OCI-LY7 (cell line): ENCODE measurements at regions of chr15 and their contacts with region 1.

Region 1: GRCh38 chr15:59528965-59529402 is 82.6 kb upstream of the GCNT3 start:
- DNase-seq: peak; percentile 81
- H3K4me3 ChIP-seq: no peak overlapping the region
- H3K27ac ChIP-seq: no peak overlapping the region
- H3K4me1 ChIP-seq: peaks cover 28% of the 10 kb centered on the region
- CTCF ChIP-seq: peak; percentile 95

Region 2: DNA sequence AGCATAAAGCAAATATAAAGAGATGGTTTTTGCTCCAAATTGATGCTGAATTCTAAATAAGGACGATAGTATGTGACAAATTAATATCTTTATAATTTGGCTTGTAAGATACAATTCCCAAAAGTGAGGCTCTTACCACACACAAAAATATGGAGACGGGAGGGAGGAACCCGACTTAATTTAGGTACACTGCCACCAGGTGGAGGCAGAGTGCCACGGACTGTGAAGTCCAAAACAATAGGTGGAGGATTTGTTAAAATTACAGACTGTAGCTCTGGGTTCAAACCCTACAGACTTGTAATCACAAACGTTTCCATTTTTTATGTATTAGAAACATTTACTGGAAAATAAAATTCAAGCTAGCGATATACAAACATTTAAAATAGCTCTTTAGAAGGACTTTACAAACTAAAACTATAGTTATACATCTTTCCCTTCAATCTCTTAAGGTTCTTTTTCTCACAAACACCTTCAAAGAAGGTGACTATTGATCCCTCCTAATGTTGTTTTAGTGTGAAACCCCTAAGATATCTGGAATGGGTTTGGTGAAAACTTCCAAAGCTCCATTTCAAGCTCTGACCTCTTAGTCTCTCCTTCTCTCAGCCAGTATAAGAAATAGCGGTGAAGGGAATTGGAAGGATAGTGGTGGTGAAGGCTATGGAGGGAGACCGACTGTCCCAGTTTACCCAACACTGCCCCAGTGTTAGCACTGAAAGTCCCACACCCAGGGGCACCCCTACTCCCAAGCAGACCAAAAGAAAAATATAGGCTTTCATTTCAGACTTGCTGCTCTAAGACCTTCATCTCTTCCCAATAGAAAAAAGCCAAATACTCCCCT is 1301.1 kb before region 1 on chr15:
- CTCF ChIA-PET with region 1: no interaction called
- POLR2A ChIA-PET with region 1: no interaction called
- intact Hi-C with region 1: loop called (anchors 1 kb)
- DNase-seq: peak; percentile 75
- H3K4me3 ChIP-seq: no peak overlapping the region
- H3K27ac ChIP-seq: no peak overlapping the region
- H3K4me1 ChIP-seq: no peaks in the 10 kb centered on the region
- CTCF ChIP-seq: peak; percentile 97

Region 3: GRCh38 chr15:59492389-59493377 is 36.3 kb before region 1 on chr15:
- CTCF ChIA-PET with region 1: no interaction called
- POLR2A ChIA-PET with region 1: no interaction called
- intact Hi-C with region 1: loop called (anchors 2 kb)
- DNase-seq: peak; percentile 76
- H3K4me3 ChIP-seq: no peak overlapping the region
- H3K27ac ChIP-seq: no peak overlapping the region
- H3K4me1 ChIP-seq: no peaks in the 10 kb centered on the region
- CTCF ChIP-seq: peak; percentile 98

Region 4: GRCh38 chr15:59562448-59563186 is 33.6 kb after region 1 on chr15:
- CTCF ChIA-PET with region 1: no interaction called
- POLR2A ChIA-PET with region 1: interaction called, 3 read pairs
- intact Hi-C with region 1: loop called (anchors 2 kb)
- DNase-seq: no peak
- H3K4me3 ChIP-seq: no peak overlapping the region
- H3K27ac ChIP-seq: no peak overlapping the region
- H3K4me1 ChIP-seq: peaks cover 6% of the 10 kb centered on the region
- CTCF ChIP-seq: peak; percentile 73

Region 5: DNA sequence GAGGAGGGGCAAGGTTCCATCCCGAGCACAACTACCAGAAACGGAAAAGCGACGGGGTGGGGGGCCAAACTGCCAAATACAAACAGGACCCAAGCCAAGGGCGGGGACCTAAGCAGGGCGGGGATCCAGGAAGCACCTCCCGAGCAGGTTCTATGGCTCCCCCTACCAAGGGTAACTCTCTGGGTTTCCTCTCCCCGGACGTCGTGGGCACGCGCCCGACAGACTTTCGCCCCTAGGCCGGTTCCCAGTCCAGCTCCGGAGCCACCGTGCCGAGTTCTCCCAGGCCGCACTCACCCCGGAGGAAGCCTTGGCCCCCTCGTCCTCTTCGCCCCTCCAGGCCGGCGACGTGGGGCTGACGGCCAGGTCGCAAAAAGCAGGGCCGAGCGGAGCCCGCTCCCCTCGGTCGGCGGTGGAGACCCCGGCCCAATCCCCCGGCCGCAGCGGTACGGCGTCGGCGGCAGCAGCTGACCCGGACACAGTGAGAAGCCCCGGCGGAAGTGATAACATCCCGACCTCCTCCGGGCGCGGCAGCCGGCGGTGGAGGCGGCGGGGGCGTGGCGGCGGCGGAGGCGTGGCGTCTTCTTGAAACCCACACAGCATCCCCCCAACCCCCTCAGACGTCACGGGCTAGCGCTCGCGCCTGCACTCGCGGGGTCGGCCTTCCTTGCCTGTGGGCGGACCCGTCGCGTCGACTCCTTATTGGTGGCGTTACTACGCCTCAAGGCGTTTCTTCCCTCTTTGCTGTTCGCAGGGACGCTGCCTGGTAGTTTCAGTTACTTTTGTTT is 160.0 kb after region 1 on chr15 and contains the start of gene BNIP2:
- CTCF ChIA-PET with region 1: no interaction called
- POLR2A ChIA-PET with region 1: no interaction called
- intact Hi-C with region 1: loop called (anchors 2 kb)
- DNase-seq: peak; percentile 98
- H3K4me3 ChIP-seq: peak within 1 kb of the TSS; percentile 97
- H3K27ac ChIP-seq: peak within 1 kb of the TSS; percentile 95
- H3K4me1 ChIP-seq: peaks cover 51% of the 10 kb centered on the region
- CTCF ChIP-seq: no peak; the same call in 1 of the 2 replicates
- total RNA-seq, gene BNIP2: 65.3 and 107 TPM in 2 replicates

Region 6: DNA sequence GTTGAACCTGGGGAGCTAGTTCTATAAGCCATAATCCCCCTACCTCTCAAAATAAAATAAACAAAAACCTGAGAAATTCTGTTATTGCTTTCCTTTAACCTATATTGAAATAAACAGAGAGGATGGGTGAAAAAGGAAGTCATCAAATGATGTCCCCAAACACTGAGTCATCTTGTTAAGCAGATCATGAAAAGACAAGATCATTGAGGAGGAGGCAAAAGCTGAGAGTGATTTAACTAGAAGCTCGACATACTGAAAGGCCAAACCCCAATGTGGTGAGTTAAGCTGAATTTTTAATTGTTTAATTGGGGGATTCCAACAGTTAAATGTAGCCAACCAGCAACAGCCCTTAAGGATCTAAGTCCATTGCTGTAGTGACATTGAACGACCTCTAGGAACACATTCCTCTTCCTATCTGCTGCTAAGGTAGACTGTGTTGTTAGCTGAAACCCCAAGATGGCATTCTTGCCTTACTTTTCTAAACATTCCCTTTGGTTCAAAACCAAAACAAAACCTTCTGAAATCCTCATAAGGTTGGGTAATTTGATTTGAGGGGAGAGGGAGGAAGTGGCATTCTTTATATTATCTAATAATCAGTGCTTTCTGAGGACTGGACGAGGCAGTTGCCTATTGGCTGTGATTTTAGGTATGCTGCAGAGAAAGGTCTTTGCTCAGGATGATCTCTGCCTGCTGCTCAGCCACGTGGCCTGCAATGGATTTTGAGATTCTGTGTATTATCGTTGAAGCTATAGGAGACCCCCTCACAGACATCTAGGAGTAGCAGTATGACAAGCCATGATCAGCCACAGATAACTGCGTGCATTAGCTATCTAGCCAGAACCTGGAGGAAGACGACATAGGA is 222.8 kb after region 1 on chr15:
- CTCF ChIA-PET with region 1: no interaction called
- POLR2A ChIA-PET with region 1: no interaction called
- intact Hi-C with region 1: no loop called
- DNase-seq: peak; percentile 11
- H3K4me3 ChIP-seq: no peak overlapping the region
- H3K27ac ChIP-seq: no peak overlapping the region
- H3K4me1 ChIP-seq: no peaks in the 10 kb centered on the region
- CTCF ChIP-seq: peak; percentile 57

Region 7: DNA sequence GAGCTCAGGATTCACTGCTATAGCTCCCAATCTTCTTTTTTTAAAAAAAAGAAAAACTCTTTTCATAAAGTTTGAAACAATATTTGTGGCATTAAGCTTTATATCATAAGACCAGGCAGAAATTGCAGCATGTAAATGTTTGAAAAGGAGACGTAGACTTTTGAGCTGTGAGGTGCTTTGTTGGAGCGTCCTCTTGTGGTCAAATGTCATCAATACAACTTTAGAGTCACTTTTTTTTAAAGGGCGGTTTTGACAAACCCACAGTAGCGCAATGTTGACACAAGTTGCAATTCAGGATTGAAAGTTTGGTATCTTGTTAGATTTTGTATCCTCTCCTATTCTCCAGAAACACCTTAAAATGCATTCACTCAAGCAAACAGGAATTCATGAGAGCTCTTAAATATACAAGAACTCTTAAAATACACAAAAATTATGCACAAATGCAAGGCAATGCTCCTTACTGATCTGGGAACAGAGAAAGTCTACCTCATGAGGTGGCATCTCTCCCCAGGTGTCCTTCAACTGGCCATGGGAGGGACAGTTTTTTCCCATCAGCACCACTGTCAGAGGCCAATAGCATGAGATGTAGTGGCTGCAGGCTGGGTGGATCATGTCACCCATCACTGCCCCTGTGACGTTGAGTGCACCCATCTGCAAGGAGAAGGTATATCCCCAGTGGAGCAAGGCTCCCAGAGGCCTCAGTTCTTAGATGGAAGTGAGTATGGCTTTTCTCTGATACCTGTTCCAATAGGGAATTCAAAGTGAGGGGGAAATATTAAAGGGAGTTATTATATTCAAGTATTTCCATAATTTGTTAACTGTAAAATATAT is 798.1 kb after region 1 on chr15:
- CTCF ChIA-PET with region 1: no interaction called
- POLR2A ChIA-PET with region 1: no interaction called
- intact Hi-C with region 1: loop called (anchors 5 kb)
- DNase-seq: peak; percentile 51
- H3K4me3 ChIP-seq: no peak overlapping the region
- H3K27ac ChIP-seq: no peak overlapping the region
- H3K4me1 ChIP-seq: no peaks in the 10 kb centered on the region
- CTCF ChIP-seq: peak; percentile 95